ENCODE measurements at regions of chr16 and their contacts with region 1.

Region 1: GRCh38 chr16:9275377-9275776 is 183.9 kb downstream of the HAPSTR1 start:
- DNase-seq: no peak

Region 2: GRCh38 chr16:9225611-9226316 is 49.6 kb before region 1 on chr16:
- intact Hi-C with region 1: no loop called
- DNase-seq: no peak

Region 3: GRCh38 chr16:9372934-9373890 is 97.8 kb after region 1 on chr16:
- intact Hi-C with region 1: no loop called
- DNase-seq: no peak

Region 4: DNA sequence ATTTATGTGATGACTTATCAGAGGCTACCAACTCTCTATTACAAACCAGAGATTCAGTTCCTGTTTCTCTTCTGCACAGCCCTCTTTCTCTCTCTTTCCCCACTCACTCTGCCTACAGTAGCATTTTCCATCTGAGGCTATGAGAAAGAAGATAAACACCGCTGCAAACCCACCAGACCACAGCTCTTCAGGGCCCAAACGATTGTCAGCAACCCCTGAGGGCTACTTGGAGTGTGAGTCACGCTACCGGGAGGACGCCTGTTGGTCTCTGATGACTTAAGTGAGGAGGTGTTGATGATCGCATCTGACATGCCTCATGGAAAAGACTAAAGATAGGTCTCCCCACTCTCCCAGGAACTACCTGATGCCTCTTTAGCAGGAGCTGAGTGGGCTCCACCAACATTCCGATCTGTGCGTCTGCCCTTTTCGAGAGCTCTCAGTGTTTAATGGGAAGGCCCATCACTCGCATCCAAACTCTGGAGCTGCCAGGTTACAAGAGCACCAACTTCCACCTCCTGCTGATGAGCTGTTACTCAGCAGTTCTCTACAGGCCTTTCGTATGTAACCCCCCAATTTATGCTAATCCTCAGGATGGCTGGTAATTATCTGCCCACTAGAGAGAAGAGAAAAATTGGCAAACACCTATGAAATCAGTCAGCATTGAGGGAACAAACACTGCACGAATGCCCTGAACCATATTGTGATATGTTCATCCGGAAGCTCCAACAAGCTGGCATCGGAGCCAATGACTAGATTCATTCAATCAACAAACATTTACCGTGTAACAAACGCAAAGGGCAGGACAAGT is 897.7 kb after region 1 on chr16:
- intact Hi-C with region 1: loop called (anchors 10 kb)
- DNase-seq: no peak